Stomach (tissue), 19 donors: ENCODE measurements at regions of chr16 and their contacts with region 1.

Region 1: GRCh38 chr16:50024684-50025536 is at the start of gene CNEP1R1:
- DNase-seq: peak; percentile 93 to 98
- H3K4me3 ChIP-seq: peak within 1 kb of the TSS; percentile 89 to 100 (median 98)
- H3K27ac ChIP-seq: peak within 1 kb of the TSS; percentile 87 to 92 (median 91)
- H3K4me1 ChIP-seq: peaks cover 14 to 46% (median 33%) of the 10 kb centered on the region in 4 donors
- H3K27me3 ChIP-seq: no peaks in the 10 kb centered on the region
- CTCF ChIP-seq: peak in 6 of 7 experiments; percentile 13 to 100 (median 100)
- EP300 ChIP-seq: no peak
- POLR2A ChIP-seq: no peak
- total RNA-seq, gene CNEP1R1: 19.2 to 36.8 (median 28.9) TPM in 4 of 5 donors, not detected in the other

Region 2: DNA sequence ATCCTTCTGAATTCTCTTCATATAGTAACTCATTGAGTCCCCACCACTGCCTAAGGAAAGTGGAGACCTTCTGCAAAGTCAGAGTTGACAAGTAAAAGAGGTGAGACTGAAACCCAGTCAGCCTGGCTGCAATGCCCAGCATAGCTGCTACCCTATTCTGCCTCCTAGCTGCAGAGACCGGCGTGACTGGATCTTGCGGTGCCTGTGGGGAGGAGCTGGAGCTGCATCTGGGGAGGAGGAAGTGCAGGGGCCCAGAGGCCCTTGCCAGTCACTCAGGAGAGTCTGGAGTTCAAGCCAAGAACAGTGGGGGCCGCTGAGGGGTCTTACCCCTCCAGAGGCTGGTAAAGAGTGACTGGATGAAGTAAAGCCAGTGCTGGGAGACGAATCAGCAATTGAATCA is 134.0 kb before region 1 on chr16:
- intact Hi-C with region 1: no loop called
- DNase-seq: peak in 1 of 2 donors; percentile 70
- H3K4me3 ChIP-seq: no peak overlapping the region
- H3K27ac ChIP-seq: no peak overlapping the region
- H3K4me1 ChIP-seq: no peaks in the 10 kb centered on the region
- H3K27me3 ChIP-seq: peaks cover 0 to 33% (median 13%) of the 10 kb centered on the region in 3 donors
- CTCF ChIP-seq: peak in 1 of 7 experiments; percentile 5
- EP300 ChIP-seq: no peak
- POLR2A ChIP-seq: no peak

Region 3: DNA sequence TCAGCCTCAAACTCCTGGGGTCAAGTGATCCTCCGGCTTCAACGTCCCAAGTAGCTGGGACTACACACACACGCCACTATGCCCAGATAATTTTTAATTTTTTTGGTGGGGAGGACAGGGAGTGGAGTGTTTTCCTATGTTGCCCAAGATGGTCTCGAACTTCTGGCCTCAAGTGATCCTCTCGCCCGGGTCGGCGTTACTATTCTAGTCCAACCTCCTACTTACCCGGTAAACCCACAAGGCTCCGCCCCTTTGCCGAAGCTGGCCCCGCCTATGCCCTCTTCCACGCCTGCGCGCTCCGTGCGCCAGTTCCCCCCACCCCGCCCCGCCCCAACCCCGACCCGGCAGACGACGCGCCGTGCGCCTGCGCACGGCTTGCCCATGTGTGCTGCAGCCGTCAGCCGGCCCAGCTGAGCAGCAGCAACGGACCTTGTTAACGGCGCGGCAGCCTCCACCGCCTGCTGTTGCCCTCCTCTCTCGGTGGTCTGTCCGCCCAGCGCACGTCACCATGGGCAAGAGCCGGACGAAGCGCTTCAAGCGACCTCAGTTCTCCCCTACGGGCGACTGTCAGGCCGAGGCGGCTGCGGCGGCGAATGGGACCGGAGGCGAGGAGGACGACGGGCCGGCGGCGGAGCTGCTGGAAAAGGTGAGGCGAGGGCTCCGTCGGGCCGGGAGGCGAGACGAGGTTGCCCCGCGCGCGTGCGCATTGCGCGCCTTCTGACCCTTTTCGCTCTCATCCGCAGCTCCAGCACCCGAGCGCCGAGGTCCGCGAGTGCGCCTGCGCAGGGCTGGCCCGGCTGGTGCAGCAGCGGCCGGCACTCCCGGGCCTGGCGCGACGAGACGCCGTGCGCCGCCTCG is 40.9 kb after region 1 on chr16 and contains the start of gene HEATR3:
- intact Hi-C with region 1: loop called (anchors 5 kb)
- DNase-seq: peak; percentile 95 to 97
- H3K4me3 ChIP-seq: peak within 1 kb of the TSS; percentile 86 to 100 (median 92)
- H3K27ac ChIP-seq: peak within 1 kb of the TSS; percentile 88 to 98 (median 96)
- H3K4me1 ChIP-seq: peaks cover 13 to 30% (median 22%) of the 10 kb centered on the region in 4 donors
- H3K27me3 ChIP-seq: no peaks in the 10 kb centered on the region
- CTCF ChIP-seq: no peak
- EP300 ChIP-seq: no peak
- POLR2A ChIP-seq: peak in 1 of 4 donors; percentile 32
- total RNA-seq, gene HEATR3: 14.0 to 45.1 (median 38.7) TPM

Region 4: DNA sequence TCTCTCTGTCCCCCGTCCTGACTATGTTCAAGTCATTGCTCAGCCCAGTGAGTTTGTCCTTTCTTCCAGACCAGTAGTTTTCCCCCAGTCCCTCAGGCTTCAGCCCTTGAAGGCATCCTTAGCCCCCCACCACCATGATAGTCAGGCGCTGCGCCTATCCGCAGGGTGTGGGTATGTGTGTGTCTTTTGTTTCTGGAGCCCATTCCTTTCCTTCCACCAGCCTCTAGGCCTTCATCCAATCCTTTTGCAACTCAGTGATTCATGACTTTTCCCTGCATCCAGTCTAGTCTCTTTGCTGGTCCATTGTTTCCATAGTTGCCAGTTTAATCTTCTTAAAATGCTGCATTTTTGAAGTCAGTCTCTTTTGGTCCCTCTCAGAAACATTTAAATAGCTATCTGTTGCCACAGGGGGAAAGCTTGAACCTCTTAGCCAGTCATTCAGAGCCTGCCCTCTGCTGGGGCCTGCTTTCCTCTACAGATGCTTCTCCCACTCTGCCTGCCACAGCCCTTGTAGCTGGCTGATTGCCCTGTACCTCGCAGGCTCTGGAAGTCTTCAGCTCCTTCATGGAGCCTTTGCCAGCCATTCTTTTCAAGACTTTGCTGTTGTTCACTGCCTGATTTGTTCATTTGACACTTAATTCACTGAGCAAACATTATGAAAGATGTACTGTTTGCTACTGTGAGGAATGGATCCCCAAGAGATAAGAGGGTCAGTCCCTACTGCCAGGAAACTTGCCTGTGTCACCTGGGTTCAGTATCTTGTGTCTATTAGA is 185.5 kb after region 1 on chr16:
- intact Hi-C with region 1: loop called (anchors 10 kb)
- DNase-seq: peak; percentile 81 to 94
- H3K4me3 ChIP-seq: no peak overlapping the region
- H3K27ac ChIP-seq: peak overlapping the region in 4 of 5 donors; percentile 11 to 31 (median 27)
- H3K4me1 ChIP-seq: peaks cover 20 to 61% (median 38%) of the 10 kb centered on the region in 4 donors
- H3K27me3 ChIP-seq: no peaks in the 10 kb centered on the region
- CTCF ChIP-seq: peak in 5 of 7 experiments; percentile 46 to 68 (median 56)
- EP300 ChIP-seq: no peak
- POLR2A ChIP-seq: no peak